HAP-1 (cell line): ENCODE measurements at regions of chr20 and their contacts with region 1.

Region 1: DNA sequence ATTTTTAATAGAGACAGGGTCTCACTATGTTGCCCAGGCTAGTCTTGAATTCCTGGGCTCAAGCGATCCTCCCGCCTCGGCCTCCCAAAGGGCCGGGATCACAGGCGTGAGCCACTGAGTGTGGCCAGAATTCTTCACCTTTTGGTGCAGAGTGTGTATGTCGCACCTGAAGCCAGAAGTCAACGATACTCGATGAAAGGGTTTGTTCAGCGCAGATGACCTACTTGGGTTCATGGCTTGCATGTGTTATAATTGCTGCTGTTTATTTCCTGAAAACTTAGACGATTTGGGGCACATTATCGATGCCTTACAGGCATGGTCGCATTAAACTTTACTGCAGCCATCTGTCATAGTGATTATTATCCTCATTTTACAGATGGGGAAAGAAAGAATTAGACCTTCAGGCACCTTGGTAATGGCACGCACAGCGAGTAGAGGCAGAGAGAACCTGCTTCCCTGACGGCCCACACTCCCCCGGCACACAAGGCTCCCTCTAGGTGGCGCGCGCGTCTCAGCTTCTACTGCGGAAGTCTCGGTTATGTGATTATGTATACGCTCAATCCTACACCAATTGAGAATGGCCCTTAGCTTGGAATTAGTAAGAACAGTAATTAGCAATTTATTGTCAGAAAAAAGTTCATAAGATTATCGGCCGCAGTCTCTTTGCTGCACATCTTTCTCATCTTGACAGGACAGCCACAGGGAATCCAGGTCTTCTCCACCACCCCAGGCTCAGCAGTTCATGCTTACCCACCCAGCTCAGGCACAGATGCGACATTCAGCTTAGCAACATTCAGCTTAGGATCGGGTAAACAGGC is 212.8 kb upstream of the PROKR2 start:
- DNase-seq: peak; percentile 63 to 92
- H3K4me3 ChIP-seq: no peak overlapping the region
- H3K4me1 ChIP-seq: no peaks in the 10 kb centered on the region; the same call in 1 of the 2 replicates
- H3K27me3 ChIP-seq: no peaks in the 10 kb centered on the region

Region 2: GRCh38 chr20:5430670-5431069 is 98.9 kb before region 1 on chr20:
- in situ Hi-C with region 1: no loop called
- DNase-seq: no peak
- H3K4me3 ChIP-seq: no peak overlapping the region
- H3K4me1 ChIP-seq: no peaks in the 10 kb centered on the region
- H3K27me3 ChIP-seq: no peaks in the 10 kb centered on the region; the same call in 1 of the 2 replicates

Region 3: GRCh38 chr20:5788385-5788895 is 258.9 kb after region 1 on chr20:
- in situ Hi-C with region 1: loop called (anchors 5 kb)
- DNase-seq: peak; percentile 77 to 84
- H3K4me3 ChIP-seq: no peak overlapping the region
- H3K4me1 ChIP-seq: peaks cover 5% of the 10 kb centered on the region; the same call in 1 of the 2 replicates
- H3K27me3 ChIP-seq: no peaks in the 10 kb centered on the region

Region 4: GRCh38 chr20:6081236-6081635 is 551.7 kb after region 1 on chr20:
- in situ Hi-C with region 1: loop called (anchors 5 kb)
- DNase-seq: no peak
- H3K4me3 ChIP-seq: no peak overlapping the region
- H3K4me1 ChIP-seq: no peaks in the 10 kb centered on the region
- H3K27me3 ChIP-seq: no peaks in the 10 kb centered on the region